ENCODE measurements at regions of chr2 and their contacts with region 1.

Region 1: GRCh38 chr2:144583741-144584453 is 64.0 kb upstream of the ZEB2 start:
- DNase-seq: peak in 1 of 2 donors; percentile 3
- ATAC-seq: peak in 1 of 3 donors; percentile 24
- H3K4me3 ChIP-seq: no peak overlapping the region
- H3K4me3 Mint-ChIP-seq: peak overlapping the region; percentile 79
- H3K27ac ChIP-seq: peak overlapping the region; percentile 42
- H3K27ac Mint-ChIP-seq: peak overlapping the region; percentile 50 to 74
- H3K4me1 ChIP-seq: peaks cover 32% of the 10 kb centered on the region
- H3K4me1 Mint-ChIP-seq: peaks cover 52% of the 10 kb centered on the region in 2 donors
- H3K27me3 ChIP-seq: no peaks in the 10 kb centered on the region
- H3K27me3 Mint-ChIP-seq: no peaks in the 10 kb centered on the region
- CTCF ChIP-seq: no peak

Region 2: GRCh38 chr2:144548532-144549191 is 35.2 kb before region 1 on chr2:
- intact Hi-C with region 1: loop called (anchors 5 kb)
- DNase-seq: peak in 1 of 2 donors; percentile 71
- ATAC-seq: peak; percentile 97 to 100 (median 98)
- H3K4me3 ChIP-seq: no peak overlapping the region
- H3K4me3 Mint-ChIP-seq: peak overlapping the region; percentile 13
- H3K27ac ChIP-seq: no peak overlapping the region
- H3K27ac Mint-ChIP-seq: peak overlapping the region; percentile 52 to 85
- H3K4me1 ChIP-seq: peaks cover 4% of the 10 kb centered on the region
- H3K4me1 Mint-ChIP-seq: peaks cover 5 to 12% of the 10 kb centered on the region in 2 donors
- H3K27me3 ChIP-seq: no peaks in the 10 kb centered on the region
- H3K27me3 Mint-ChIP-seq: no peaks in the 10 kb centered on the region
- CTCF ChIP-seq: no peak

Region 3: GRCh38 chr2:144567745-144568144 is 16.2 kb before region 1 on chr2:
- intact Hi-C with region 1: loop called (anchors 1 kb)
- DNase-seq: no peak
- ATAC-seq: no peak
- H3K4me3 ChIP-seq: no peak overlapping the region
- H3K4me3 Mint-ChIP-seq: no peak overlapping the region
- H3K27ac ChIP-seq: no peak overlapping the region
- H3K27ac Mint-ChIP-seq: no peak overlapping the region
- H3K4me1 ChIP-seq: no peaks in the 10 kb centered on the region
- H3K4me1 Mint-ChIP-seq: peaks cover 6 to 10% of the 10 kb centered on the region in 2 donors
- H3K27me3 ChIP-seq: no peaks in the 10 kb centered on the region
- H3K27me3 Mint-ChIP-seq: peaks cover 0 to 2% of the 10 kb centered on the region in 2 donors
- CTCF ChIP-seq: no peak